Transverse colon (tissue), 4 donors: ENCODE measurements at regions of chr7 and their contacts with region 1.

Region 1: DNA sequence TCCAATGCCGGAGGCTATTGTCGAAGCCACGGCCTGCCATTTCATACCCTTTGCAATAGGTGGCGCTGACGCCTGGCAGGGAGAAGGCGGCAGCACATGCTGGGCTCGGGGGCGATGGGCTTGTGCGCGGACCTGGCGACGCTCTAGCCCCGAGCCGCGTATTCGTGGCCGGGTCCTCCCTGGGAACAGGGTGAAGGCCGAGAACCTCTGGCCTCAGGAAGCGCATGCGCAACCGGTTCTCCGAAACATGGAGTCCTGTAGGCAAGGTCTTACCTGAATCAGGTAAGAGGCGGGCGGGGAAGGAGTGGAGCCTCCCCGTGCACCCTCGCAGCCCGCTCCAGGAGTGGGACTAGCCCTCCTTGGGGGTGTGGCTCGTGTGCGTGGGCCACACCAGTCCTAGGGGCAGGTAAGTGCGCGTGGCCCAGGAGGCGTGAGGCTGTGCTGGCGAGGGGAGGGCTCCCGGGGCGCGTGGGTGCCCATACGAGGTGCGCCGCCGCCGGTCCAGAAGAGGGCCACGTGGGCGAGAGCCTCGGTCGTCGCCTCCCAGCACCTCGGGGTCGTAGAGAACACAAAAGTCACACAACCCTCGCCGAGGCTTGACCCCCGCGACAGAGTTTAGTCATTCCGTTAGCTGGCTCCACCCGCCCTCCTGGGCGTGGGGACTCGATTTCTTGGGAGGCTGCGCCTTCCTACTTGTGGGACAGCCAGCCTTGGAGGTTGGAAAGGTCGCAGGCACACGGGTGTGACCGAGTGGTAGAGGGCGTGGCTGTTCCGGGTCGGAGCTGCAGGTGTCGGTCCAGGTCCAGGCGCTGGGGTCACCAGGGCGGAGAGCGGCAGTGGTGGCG is 5.5 kb upstream of the MEST start:
- DNase-seq: peak; percentile 87
- H3K4me3 ChIP-seq: peak overlapping the region; percentile 33 to 53 (median 46)
- H3K27ac ChIP-seq: peak overlapping the region; percentile 74 to 81 (median 78)
- H3K4me1 ChIP-seq: peaks cover 4 to 20% (median 12%) of the 10 kb centered on the region in 4 donors
- H3K27me3 ChIP-seq: peaks cover 7% of the 10 kb centered on the region
- CTCF ChIP-seq: peak; percentile 68 to 87 (median 78)
- EP300 ChIP-seq: no peak
- POLR2A ChIP-seq: peak; percentile 46

Region 2: GRCh38 chr7:130277763-130278643 is 208.3 kb before region 1 on chr7:
- in situ Hi-C with region 1: loop called in 1 of 4 experiments (anchors 25 kb)
- intact Hi-C with region 1: no loop called
- DNase-seq: peak; percentile 22
- H3K4me3 ChIP-seq: no peak overlapping the region
- H3K27ac ChIP-seq: peak overlapping the region in 1 of 4 donors; percentile 1
- H3K4me1 ChIP-seq: peaks cover 0 to 21% (median 0%) of the 10 kb centered on the region in 4 donors
- H3K27me3 ChIP-seq: no peaks in the 10 kb centered on the region
- CTCF ChIP-seq: peak in 4 of 5 experiments; percentile 23 to 47 (median 40)
- EP300 ChIP-seq: no peak
- POLR2A ChIP-seq: no peak

Region 3: GRCh38 chr7:130632111-130632510 is 145.8 kb after region 1 on chr7:
- in situ Hi-C with region 1: no loop called
- intact Hi-C with region 1: no loop called
- DNase-seq: no peak
- H3K4me3 ChIP-seq: no peak overlapping the region
- H3K27ac ChIP-seq: no peak overlapping the region
- H3K4me1 ChIP-seq: no peaks in the 10 kb centered on the region
- H3K27me3 ChIP-seq: no peaks in the 10 kb centered on the region
- CTCF ChIP-seq: no peak
- EP300 ChIP-seq: no peak
- POLR2A ChIP-seq: no peak